Left cardiac atrium (tissue), 4 donors: ENCODE measurements at regions of chr13 and their contacts with region 1.

Region 1: DNA sequence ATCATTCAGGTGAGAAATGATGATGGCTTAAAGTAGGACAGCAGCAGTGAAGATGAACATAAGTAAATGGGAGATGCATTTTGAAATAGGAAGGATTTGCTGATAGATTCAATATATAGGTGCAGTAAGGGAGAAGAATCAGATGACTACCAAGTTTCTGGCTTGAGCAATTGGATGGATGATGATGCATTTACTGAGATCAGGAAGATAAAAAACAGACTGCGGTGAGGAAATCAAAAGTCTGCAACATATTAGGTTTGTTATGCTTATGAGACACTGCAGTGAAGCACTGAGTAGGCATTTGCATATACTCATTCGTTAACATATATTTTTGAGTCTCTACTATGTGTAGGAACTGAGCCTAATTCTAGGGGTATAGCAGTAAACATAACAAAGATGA is 184.2 kb downstream of the LACC1 start:
- DNase-seq: no peak
- ATAC-seq: no peak

Region 2: DNA sequence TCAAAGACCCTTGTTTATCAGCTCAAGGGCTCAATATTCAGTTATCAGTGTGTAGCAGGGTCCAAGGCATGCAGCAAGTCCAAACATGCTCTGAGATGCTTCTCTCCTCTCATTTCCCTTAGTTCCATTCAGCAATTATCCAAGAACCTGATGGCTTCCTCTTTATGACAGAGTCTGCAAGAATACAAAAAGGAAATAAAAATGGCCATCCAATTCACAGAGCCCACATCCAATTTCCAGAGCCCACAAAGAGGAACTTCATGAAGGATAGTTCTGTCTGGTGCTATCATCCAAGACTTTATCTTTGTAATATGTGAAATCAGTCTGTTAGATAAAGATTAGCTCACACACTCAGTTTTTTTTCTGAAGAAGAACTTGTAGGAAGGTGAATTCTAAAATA is 33.0 kb after region 1 on chr13:
- intact Hi-C with region 1: loop called in 1 of 2 experiments (anchors 5 kb)
- DNase-seq: no peak
- ATAC-seq: no peak